CD4-positive, alpha-beta memory T cell (primary cell): ENCODE measurements at regions of chr13 and their contacts with region 1.

Region 1: GRCh38 chr13:24693862-24694471 is 13.8 kb downstream of the ATP12A start:
- DNase-seq: peak; percentile 30 to 47 (median 42)
- H3K4me3 ChIP-seq: no peak overlapping the region
- H3K4me3 Mint-ChIP-seq: peak overlapping the region in 7 of 8 donors; percentile 17 to 84 (median 59)
- H3K27ac ChIP-seq: no peak overlapping the region
- H3K27ac Mint-ChIP-seq: peak overlapping the region in 1 of 7 donors; percentile 64
- H3K4me1 ChIP-seq: peaks cover 7% of the 10 kb centered on the region
- H3K4me1 Mint-ChIP-seq: peaks cover 3 to 13% (median 7%) of the 10 kb centered on the region in 4 donors
- H3K27me3 ChIP-seq: no peaks in the 10 kb centered on the region
- H3K27me3 Mint-ChIP-seq: peaks cover 10 to 39% of the 10 kb centered on the region in 2 donors

Region 2: GRCh38 chr13:24450530-24450929 is 243.4 kb before region 1 on chr13:
- CTCF ChIA-PET with region 1: no interaction called
- POLR2A ChIA-PET with region 1: no interaction called
- intact Hi-C with region 1: no loop called
- DNase-seq: no peak
- H3K4me3 ChIP-seq: no peak overlapping the region
- H3K4me3 Mint-ChIP-seq: no peak overlapping the region
- H3K27ac ChIP-seq: no peak overlapping the region
- H3K27ac Mint-ChIP-seq: peak overlapping the region in 2 of 7 donors; percentile 31 to 36
- H3K4me1 ChIP-seq: no peaks in the 10 kb centered on the region
- H3K4me1 Mint-ChIP-seq: peaks cover 0 to 2% (median 0%) of the 10 kb centered on the region in 4 donors
- H3K27me3 ChIP-seq: no peaks in the 10 kb centered on the region
- H3K27me3 Mint-ChIP-seq: no peaks in the 10 kb centered on the region

Region 3: GRCh38 chr13:24709186-24709913 is 15.4 kb after region 1 on chr13:
- CTCF ChIA-PET with region 1: interaction called, 13 read pairs
- POLR2A ChIA-PET with region 1: interaction called, 4 read pairs
- intact Hi-C with region 1: no loop called
- DNase-seq: peak; percentile 68 to 87 (median 78)
- H3K4me3 ChIP-seq: peak overlapping the region in 1 of 2 donors; percentile 11
- H3K4me3 Mint-ChIP-seq: peak overlapping the region; percentile 52 to 82 (median 70)
- H3K27ac ChIP-seq: no peak overlapping the region
- H3K27ac Mint-ChIP-seq: peak overlapping the region; percentile 81 to 90 (median 86)
- H3K4me1 ChIP-seq: peaks cover 13% of the 10 kb centered on the region
- H3K4me1 Mint-ChIP-seq: peaks cover 12 to 16% (median 13%) of the 10 kb centered on the region in 4 donors
- H3K27me3 ChIP-seq: no peaks in the 10 kb centered on the region
- H3K27me3 Mint-ChIP-seq: peaks cover under 1 to 1% of the 10 kb centered on the region in 2 donors